GM10248 (cell line): ENCODE measurements at regions of chr11 and their contacts with region 1.

Region 1: DNA sequence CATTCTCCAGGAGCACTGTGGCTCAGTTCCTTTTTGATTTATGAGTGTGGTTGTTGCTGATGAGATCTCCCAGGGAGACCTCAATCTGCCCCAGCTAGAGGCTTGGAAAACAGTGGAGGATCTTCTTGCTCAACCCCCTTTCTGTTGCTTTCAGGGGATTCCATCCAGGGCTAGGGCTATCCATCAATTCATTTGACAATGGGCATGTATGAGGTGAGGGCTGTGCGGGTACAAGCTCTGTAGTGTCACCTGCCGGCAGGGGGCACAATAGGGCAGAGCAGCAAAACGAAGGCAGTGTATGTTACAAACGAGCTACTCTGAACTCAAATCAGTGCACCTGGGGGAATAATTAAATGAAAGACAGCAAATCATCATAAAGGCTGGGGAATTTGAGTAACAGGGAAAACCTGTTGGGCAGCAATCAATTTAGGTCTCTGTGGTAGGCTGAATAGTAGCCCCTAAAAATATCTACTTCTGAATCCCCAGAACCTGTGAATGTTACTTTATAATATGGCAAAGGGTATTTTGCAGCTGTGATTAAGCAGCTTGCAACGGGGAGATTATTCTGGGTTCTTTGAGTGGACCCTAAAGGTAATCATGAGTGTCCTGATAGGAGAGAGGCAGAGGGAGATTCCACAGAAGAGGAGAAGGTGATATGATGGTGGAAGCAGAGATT is 170.3 kb upstream of the ZBED5 start:
- DNase-seq: peak; percentile 53
- CTCF ChIP-seq: peak; percentile 86

Region 2: GRCh38 chr11:10933455-10934292 is 94.5 kb before region 1 on chr11:
- CTCF ChIA-PET with region 1: interaction called, 29 read pairs
- POLR2A ChIA-PET with region 1: no interaction called
- DNase-seq: peak; percentile 79
- CTCF ChIP-seq: peak; percentile 89

Region 3: GRCh38 chr11:10975287-10975721 is 52.9 kb before region 1 on chr11:
- CTCF ChIA-PET with region 1: no interaction called
- POLR2A ChIA-PET with region 1: no interaction called
- DNase-seq: no peak
- CTCF ChIP-seq: no peak

Region 4: DNA sequence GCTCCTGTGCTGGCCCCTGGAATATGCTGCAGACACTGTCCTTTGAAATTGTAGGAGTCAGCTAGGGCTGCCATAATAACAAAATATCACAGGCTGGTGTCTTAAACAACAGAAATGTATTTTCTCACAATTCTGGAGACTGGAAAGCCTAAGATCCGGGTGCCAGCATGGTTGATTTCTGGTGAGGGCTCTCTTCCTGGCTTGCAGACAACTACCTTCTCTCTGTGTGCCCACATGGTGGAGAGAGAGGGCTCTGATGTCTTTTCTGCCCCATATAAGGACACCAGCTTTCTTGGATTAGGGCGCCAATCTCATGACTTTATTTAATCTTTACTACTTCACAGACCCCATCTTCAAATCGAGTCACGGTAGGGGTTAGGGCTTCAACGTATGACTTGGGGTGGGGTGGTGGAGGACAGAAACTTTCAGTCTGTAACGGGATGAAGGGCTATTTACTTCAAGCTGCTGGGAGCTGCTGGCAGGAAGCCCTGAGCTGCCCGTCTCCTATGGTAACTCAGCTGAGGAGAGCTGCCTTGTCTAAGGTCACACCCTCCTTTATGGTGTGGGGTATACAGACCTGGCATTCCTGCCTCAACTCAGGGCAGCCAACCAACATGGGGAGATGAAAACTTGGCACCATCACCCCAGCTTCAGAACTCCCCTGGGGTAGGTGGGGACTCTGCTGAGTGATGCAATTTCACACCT is 27.4 kb before region 1 on chr11:
- CTCF ChIA-PET with region 1: interaction called, 17 read pairs
- POLR2A ChIA-PET with region 1: no interaction called
- DNase-seq: no peak
- CTCF ChIP-seq: no peak

Region 5: GRCh38 chr11:11265994-11266606 is 237.9 kb after region 1 on chr11:
- CTCF ChIA-PET with region 1: interaction called, 13 read pairs
- POLR2A ChIA-PET with region 1: no interaction called
- DNase-seq: peak; percentile 83
- CTCF ChIP-seq: peak; percentile 73

Region 6: DNA sequence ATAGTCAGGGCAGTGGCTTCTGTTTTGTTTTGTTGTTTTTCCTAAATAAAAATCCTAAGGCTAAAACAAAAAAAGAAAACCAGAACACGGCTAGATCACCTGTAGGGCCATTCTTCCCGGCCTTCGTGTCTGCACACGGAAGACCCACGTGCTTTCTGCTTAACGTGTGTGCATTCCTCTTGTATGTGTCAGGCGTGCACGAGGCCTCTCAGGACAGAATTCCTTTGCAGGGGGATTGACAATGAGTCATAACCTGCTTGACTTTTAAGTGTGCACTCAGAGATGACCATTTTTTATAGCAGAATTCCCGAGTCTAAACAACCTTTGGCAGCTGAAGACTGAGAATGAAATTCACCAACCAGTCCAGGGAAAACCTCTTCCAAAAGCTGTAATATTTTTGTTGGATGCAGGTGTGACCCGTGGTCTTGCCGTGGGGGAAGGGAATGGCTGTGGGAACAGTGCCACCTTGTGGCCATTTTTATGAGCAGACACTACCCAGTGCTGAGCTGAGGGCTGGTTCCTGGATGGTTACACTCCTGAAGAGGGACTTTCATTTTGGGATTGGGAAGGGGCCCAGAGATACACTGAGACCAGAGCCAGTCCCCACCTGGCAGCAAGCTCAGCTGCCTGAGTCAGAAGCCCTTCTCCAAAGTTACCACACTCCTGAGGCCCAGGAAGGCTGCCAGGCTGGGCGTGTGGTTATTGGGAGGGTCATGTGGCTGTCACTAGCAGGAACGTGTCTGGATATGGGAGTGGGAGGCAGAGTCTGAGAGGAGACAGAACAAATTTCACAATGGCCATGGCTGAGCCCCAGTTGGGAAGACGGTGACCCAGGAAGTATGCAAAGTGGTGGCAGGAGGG is 1016.0 kb after region 1 on chr11:
- CTCF ChIA-PET with region 1: interaction called, 13 read pairs
- POLR2A ChIA-PET with region 1: no interaction called
- DNase-seq: peak; percentile 68
- CTCF ChIP-seq: peak; percentile 90